BJ (cell line): ENCODE measurements at regions of chr17 and their contacts with region 1.

Region 1: GRCh38 chr17:62975206-62975605 is 9.2 kb downstream of the TANC2 start:
- DNase-seq: no peak
- H3K4me3 ChIP-seq: no peak overlapping the region
- H3K27me3 ChIP-seq: no peaks in the 10 kb centered on the region
- CTCF ChIP-seq: no peak

Region 2: GRCh38 chr17:62709674-62710519 is 265.3 kb before region 1 on chr17:
- CTCF ChIA-PET with region 1: no interaction called
- POLR2A ChIA-PET with region 1: interaction called, 12 read pairs
- DNase-seq: no peak
- H3K4me3 ChIP-seq: no peak overlapping the region
- H3K27me3 ChIP-seq: no peaks in the 10 kb centered on the region
- CTCF ChIP-seq: no peak

Region 3: GRCh38 chr17:62800279-62801042 is 174.7 kb before region 1 on chr17:
- CTCF ChIA-PET with region 1: no interaction called
- POLR2A ChIA-PET with region 1: interaction called, 16 read pairs
- DNase-seq: no peak
- H3K4me3 ChIP-seq: no peak overlapping the region
- H3K27me3 ChIP-seq: no peaks in the 10 kb centered on the region
- CTCF ChIP-seq: no peak

Region 4: GRCh38 chr17:62933501-62934385 is 41.5 kb before region 1 on chr17:
- CTCF ChIA-PET with region 1: no interaction called
- POLR2A ChIA-PET with region 1: no interaction called
- DNase-seq: no peak
- H3K4me3 ChIP-seq: no peak overlapping the region
- H3K27me3 ChIP-seq: no peaks in the 10 kb centered on the region; the same call in 1 of the 2 replicates
- CTCF ChIP-seq: no peak